Esophagus muscularis mucosa (tissue), 4 donors: ENCODE measurements at regions of chr6 and their contacts with region 1.

Region 1: GRCh38 chr6:35016502-35017321 is 124.4 kb downstream of the TCP11 start:
- DNase-seq: peak; percentile 91
- H3K4me3 ChIP-seq: peak overlapping the region; percentile 62 to 79 (median 72)
- H3K27ac ChIP-seq: peak overlapping the region; percentile 92 to 99 (median 96)
- H3K4me1 ChIP-seq: peaks cover 57 to 70% (median 67%) of the 10 kb centered on the region in 4 donors
- H3K27me3 ChIP-seq: no peaks in the 10 kb centered on the region
- CTCF ChIP-seq: no peak
- EP300 ChIP-seq: no peak
- POLR2A ChIP-seq: peak; percentile 8

Region 2: GRCh38 chr6:35049900-35050756 is 33.4 kb after region 1 on chr6:
- intact Hi-C with region 1: loop called (anchors 5 kb)
- DNase-seq: no peak
- H3K4me3 ChIP-seq: peak overlapping the region; percentile 7 to 28 (median 13)
- H3K27ac ChIP-seq: peak overlapping the region; percentile 85 to 92 (median 92)
- H3K4me1 ChIP-seq: peaks cover 87 to 100% (median 99%) of the 10 kb centered on the region in 4 donors
- H3K27me3 ChIP-seq: no peaks in the 10 kb centered on the region
- CTCF ChIP-seq: no peak
- EP300 ChIP-seq: no peak
- POLR2A ChIP-seq: no peak

Region 3: DNA sequence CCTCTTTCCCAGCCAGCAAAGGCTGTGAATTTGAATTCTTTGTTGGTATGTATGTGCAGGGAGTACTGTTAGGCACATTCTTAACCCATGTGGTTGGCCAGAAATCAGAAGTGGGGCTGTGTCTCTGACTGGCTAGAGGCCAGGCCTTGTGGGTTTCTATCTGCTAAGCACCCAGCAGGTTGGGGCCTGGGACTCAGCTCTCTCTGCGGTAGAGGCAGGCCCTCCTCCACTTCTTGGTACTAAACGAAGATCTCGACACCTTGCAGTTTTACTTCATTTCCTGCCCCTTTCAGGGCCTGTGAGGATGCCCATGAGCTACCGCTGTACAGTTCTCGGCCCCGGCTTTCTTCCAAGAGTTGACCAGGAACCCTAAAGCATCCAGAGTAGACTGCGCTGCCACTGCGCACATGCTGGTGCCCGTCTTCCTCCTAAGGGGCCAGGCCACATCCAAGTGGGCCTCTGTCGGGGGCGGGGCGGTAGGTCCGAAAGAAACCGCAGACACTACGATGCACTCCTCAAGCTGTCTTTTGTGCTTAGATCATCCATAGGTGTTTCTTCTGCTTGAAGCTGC is 73.3 kb after region 1 on chr6:
- intact Hi-C with region 1: loop called (anchors 5 kb)
- DNase-seq: no peak
- H3K4me3 ChIP-seq: no peak overlapping the region
- H3K27ac ChIP-seq: peak overlapping the region; percentile 50 to 77 (median 69)
- H3K4me1 ChIP-seq: peaks cover 30 to 89% (median 85%) of the 10 kb centered on the region in 4 donors
- H3K27me3 ChIP-seq: no peaks in the 10 kb centered on the region
- CTCF ChIP-seq: no peak
- EP300 ChIP-seq: no peak
- POLR2A ChIP-seq: no peak

Region 4: GRCh38 chr6:35120746-35121145 is 104.0 kb after region 1 on chr6:
- intact Hi-C with region 1: no loop called
- DNase-seq: no peak
- H3K4me3 ChIP-seq: no peak overlapping the region
- H3K27ac ChIP-seq: no peak overlapping the region
- H3K4me1 ChIP-seq: no peaks in the 10 kb centered on the region
- H3K27me3 ChIP-seq: no peaks in the 10 kb centered on the region
- CTCF ChIP-seq: no peak
- EP300 ChIP-seq: no peak
- POLR2A ChIP-seq: no peak